Esophagus muscularis mucosa (tissue), 4 donors: ENCODE measurements at regions of chr6 and their contacts with region 1.

Region 1: GRCh38 chr6:127302728-127303660 is 36.3 kb downstream of the RNF146 start:
- DNase-seq: no peak
- H3K4me3 ChIP-seq: no peak overlapping the region
- H3K27ac ChIP-seq: no peak overlapping the region
- H3K4me1 ChIP-seq: peaks cover 11 to 47% (median 39%) of the 10 kb centered on the region in 4 donors
- H3K27me3 ChIP-seq: no peaks in the 10 kb centered on the region
- CTCF ChIP-seq: peak; percentile 72 to 80 (median 78)
- EP300 ChIP-seq: no peak
- POLR2A ChIP-seq: no peak

Region 2: GRCh38 chr6:127420556-127420955 is 117.6 kb after region 1 on chr6:
- intact Hi-C with region 1: loop called (anchors 2 kb)
- DNase-seq: no peak
- H3K4me3 ChIP-seq: no peak overlapping the region
- H3K27ac ChIP-seq: peak overlapping the region; percentile 51 to 64 (median 56)
- H3K4me1 ChIP-seq: peaks cover 0 to 26% (median 17%) of the 10 kb centered on the region in 4 donors
- H3K27me3 ChIP-seq: no peaks in the 10 kb centered on the region
- CTCF ChIP-seq: peak; percentile 44 to 51 (median 51)
- EP300 ChIP-seq: no peak
- POLR2A ChIP-seq: no peak

Region 3: DNA sequence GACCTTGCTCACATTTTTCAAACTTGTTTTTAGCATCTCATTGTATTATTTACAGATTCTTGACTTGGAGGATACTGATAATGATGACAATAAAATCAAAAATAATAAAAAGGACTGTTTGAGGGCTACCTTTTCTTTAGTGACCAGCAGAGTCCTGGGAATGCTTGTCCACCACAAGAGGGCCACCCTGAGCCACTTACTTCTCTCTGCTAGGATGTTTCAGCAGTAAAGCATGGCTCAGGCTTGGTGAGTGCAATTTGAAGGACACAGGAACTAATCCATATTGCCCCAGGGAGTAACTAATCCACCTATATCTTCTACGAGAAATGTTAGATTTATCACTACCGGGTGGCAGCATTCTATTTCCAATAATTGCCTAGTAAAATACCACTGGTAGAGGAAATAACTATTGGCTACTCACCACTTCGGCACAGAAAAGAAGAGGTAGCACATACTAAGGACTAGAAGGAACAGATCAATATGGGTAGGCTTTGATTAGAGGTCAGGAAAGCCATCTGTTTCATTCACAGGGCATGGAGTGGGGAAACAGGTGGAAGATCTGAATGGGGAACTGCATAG is 162.0 kb after region 1 on chr6:
- intact Hi-C with region 1: loop called (anchors 5 kb)
- DNase-seq: no peak
- H3K4me3 ChIP-seq: no peak overlapping the region
- H3K27ac ChIP-seq: peak overlapping the region; percentile 70 to 83 (median 76)
- H3K4me1 ChIP-seq: peaks cover 3 to 61% (median 53%) of the 10 kb centered on the region in 4 donors
- H3K27me3 ChIP-seq: no peaks in the 10 kb centered on the region
- CTCF ChIP-seq: peak; percentile 76 to 87 (median 81)
- EP300 ChIP-seq: no peak
- POLR2A ChIP-seq: no peak

Region 4: DNA sequence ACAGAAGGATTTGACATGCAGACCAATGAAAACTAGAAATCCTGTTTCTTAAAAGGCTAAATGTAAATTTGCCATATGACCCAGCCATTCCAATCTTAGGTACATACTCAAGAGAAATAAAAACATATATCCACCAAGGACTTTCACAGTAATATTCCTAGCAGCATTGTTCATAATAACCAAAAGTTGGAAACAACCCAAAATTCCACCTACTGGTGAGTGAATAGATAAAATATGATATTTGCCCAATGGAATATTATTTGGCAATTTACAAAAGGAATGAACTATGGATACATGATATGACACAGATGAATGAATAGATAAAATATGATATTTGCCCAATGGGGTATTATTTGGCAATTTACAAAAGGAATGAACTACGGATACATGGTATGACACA is 193.5 kb after region 1 on chr6:
- intact Hi-C with region 1: no loop called
- DNase-seq: no peak
- H3K4me3 ChIP-seq: no peak overlapping the region
- H3K27ac ChIP-seq: no peak overlapping the region
- H3K4me1 ChIP-seq: no peaks in the 10 kb centered on the region
- H3K27me3 ChIP-seq: no peaks in the 10 kb centered on the region
- CTCF ChIP-seq: no peak
- EP300 ChIP-seq: no peak
- POLR2A ChIP-seq: no peak

Region 5: GRCh38 chr6:127539272-127539671 is 236.3 kb after region 1 on chr6:
- intact Hi-C with region 1: loop called (anchors 5 kb)
- DNase-seq: no peak
- H3K4me3 ChIP-seq: no peak overlapping the region
- H3K27ac ChIP-seq: no peak overlapping the region
- H3K4me1 ChIP-seq: peaks cover 0 to 4% (median 2%) of the 10 kb centered on the region in 4 donors
- H3K27me3 ChIP-seq: no peaks in the 10 kb centered on the region
- CTCF ChIP-seq: peak; percentile 32 to 56 (median 49)
- EP300 ChIP-seq: no peak
- POLR2A ChIP-seq: no peak